ENCODE measurements at regions of chr4 and their contacts with region 1.

Region 1: DNA sequence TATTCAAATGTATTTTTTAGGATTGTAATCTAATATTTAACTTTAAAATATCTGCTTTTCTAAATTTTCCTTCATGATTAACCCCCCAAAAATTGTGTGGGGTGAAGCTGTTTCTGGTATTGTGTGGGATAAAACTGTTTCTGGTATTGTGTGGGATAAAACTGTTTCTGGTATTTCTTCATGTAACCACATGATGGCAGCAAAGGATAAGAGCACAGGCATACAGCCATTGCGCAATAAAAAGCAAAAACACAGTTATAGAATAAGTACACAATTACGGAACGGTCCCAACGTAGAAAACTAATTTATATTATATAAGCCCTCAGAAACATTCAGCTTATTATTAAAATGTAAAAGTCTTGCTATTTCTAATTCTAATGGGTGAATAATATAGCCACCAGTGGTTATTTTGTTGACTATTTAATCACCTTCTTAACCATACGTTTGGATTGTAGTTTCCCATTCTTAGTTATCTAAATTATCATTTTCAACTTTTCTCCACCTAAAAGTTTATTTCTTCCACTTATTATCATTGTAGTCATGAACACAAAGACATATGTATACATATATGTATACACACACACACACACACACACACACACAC is 333.9 kb upstream of the FSTL5 start:
- DNase-seq: peak; percentile 57
- H3K4me3 ChIP-seq: no peak overlapping the region
- H3K27ac ChIP-seq: no peak overlapping the region
- H3K4me1 ChIP-seq: no peaks in the 10 kb centered on the region
- H3K27me3 ChIP-seq: no peaks in the 10 kb centered on the region
- CTCF ChIP-seq: peak; percentile 76

Region 2: GRCh38 chr4:162943263-162943662 is 445.6 kb after region 1 on chr4:
- CTCF ChIA-PET with region 1: no interaction called
- POLR2A ChIA-PET with region 1: no interaction called
- intact Hi-C with region 1: loop called (anchors 5 kb)
- DNase-seq: no peak
- H3K4me3 ChIP-seq: no peak overlapping the region
- H3K27ac ChIP-seq: no peak overlapping the region
- H3K4me1 ChIP-seq: peaks cover 6% of the 10 kb centered on the region
- H3K27me3 ChIP-seq: no peaks in the 10 kb centered on the region
- CTCF ChIP-seq: peak; percentile 40

Region 3: DNA sequence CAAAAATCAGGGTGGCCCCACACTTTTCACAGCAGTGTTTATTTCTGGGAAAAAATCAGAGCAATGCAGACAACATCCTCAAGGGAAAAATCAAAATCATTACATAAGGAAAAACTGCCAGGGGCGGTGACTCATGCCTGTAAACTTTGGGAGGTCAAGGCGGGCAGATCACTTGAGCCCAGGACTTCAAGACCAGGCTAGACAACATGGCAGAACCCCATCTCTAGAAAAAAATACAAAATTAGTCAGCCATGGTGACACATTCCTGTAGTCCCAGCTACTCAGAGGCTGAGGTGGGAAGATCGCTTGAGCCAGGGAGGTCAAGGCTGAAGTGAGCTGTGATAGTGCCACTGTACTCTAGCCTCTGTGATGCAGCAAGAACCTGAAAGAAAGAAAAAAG is 566.2 kb after region 1 on chr4:
- CTCF ChIA-PET with region 1: no interaction called
- POLR2A ChIA-PET with region 1: no interaction called
- intact Hi-C with region 1: no loop called
- DNase-seq: no peak
- H3K4me3 ChIP-seq: no peak overlapping the region
- H3K27ac ChIP-seq: no peak overlapping the region
- H3K4me1 ChIP-seq: no peaks in the 10 kb centered on the region
- H3K27me3 ChIP-seq: no peaks in the 10 kb centered on the region
- CTCF ChIP-seq: no peak

Measured in A673 (cell line).